ENCODE measurements at regions of chr21 and their contacts with region 1.

Region 1: DNA sequence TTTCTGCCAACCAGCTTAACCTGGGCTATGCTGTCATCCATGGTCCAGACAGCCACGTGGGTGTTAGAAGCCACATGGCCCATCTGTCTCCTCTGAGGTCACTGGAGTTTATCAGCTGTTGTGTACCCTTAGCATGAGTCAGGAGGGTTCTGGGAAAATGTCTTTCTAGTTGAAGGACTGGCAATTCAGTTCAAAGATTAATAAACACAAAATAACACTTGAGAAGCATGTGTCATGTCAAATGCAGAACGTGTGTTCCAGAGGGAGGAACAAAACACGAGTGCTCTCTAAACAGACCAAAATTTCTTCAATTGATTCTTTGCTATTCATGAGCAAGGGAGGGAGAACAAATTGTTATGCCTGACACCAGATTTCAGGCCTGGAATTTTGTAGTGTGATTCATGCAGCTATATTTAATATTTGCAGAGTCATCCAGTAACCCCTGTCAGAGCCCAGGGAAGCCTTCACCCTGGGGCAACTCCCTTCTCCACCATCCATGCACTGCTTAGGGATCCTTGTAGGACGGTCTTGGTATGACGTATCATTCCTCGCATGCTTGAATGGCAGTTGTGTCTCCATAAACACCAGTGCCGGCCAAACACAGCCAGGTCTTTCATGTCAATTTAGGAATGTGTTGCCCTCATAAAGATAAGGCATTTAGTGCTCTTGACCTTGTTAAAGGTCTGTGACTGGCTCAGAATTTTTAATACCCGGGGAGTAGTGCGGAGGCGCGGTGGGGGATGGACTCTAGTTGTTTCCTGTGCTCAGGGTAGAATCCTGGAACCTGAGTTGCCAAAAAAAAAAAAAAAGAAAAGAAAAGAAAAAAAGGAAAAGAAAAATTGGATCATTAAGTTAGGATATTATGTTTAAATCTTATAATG is 27.7 kb upstream of the DYRK1A start:
- DNase-seq: peak; percentile 80 to 96
- H3K4me3 ChIP-seq: peak overlapping the region; percentile 48
- H3K27ac ChIP-seq: peak overlapping the region; percentile 83
- H3K4me1 ChIP-seq: peaks cover 25% of the 10 kb centered on the region
- H3K27me3 ChIP-seq: no peaks in the 10 kb centered on the region
- CTCF ChIP-seq: no peak

Region 2: GRCh38 chr21:37357691-37358353 is 18.9 kb after region 1 on chr21:
- CTCF ChIA-PET with region 1: no interaction called
- POLR2A ChIA-PET with region 1: interaction called, 7 read pairs
- intact Hi-C with region 1: loop called (anchors 1 kb)
- DNase-seq: peak; percentile 15 to 67
- H3K4me3 ChIP-seq: no peak overlapping the region
- H3K27ac ChIP-seq: peak overlapping the region; percentile 37; the same call in 1 of the 2 replicates
- H3K4me1 ChIP-seq: peaks cover 12% of the 10 kb centered on the region
- H3K27me3 ChIP-seq: no peaks in the 10 kb centered on the region
- CTCF ChIP-seq: no peak